Naive thymus-derived CD8-positive, alpha-beta T cell (primary cell): ENCODE measurements at regions of chr4 and their contacts with region 1.

Region 1: GRCh38 chr4:4347585-4347984 is 39.3 kb upstream of the NSG1 start:
- DNase-seq: peak in 2 of 10 donors; percentile 3 to 10
- ATAC-seq: no peak
- H3K4me3 Mint-ChIP-seq: peak overlapping the region in 9 of 10 donors; percentile 1 to 82 (median 60)
- H3K27ac Mint-ChIP-seq: peak overlapping the region; percentile 59 to 99 (median 94)
- H3K4me1 Mint-ChIP-seq: peaks cover 27 to 63% (median 45%) of the 10 kb centered on the region in 4 donors
- H3K27me3 Mint-ChIP-seq: no peaks in the 10 kb centered on the region

Region 2: GRCh38 chr4:4308800-4309441 is 38.7 kb before region 1 on chr4:
- POLR2A ChIA-PET with region 1: no interaction called
- DNase-seq: no peak
- ATAC-seq: no peak
- H3K4me3 Mint-ChIP-seq: no peak overlapping the region
- H3K27ac Mint-ChIP-seq: no peak overlapping the region
- H3K4me1 Mint-ChIP-seq: peaks cover 3 to 7% (median 6%) of the 10 kb centered on the region in 4 donors
- H3K27me3 Mint-ChIP-seq: no peaks in the 10 kb centered on the region

Region 3: GRCh38 chr4:4334798-4335520 is 12.6 kb before region 1 on chr4:
- POLR2A ChIA-PET with region 1: interaction called, 36 read pairs
- DNase-seq: peak; percentile 56 to 86 (median 73)
- ATAC-seq: peak; percentile 98
- H3K4me3 Mint-ChIP-seq: peak overlapping the region in 6 of 10 donors; percentile 42 to 62 (median 56)
- H3K27ac Mint-ChIP-seq: peak overlapping the region in 8 of 10 donors; percentile 23 to 86 (median 58)
- H3K4me1 Mint-ChIP-seq: peaks cover 0 to 23% (median 9%) of the 10 kb centered on the region in 4 donors
- H3K27me3 Mint-ChIP-seq: peaks cover 0 to 1% (median 0%) of the 10 kb centered on the region in 5 donors

Region 4: GRCh38 chr4:4386736-4387392 is 39.3 kb after region 1 on chr4 and contains the start of gene NSG1:
- POLR2A ChIA-PET with region 1: interaction called, 31 read pairs
- DNase-seq: peak; percentile 8 to 74 (median 55)
- ATAC-seq: peak; percentile 62 to 70
- H3K4me3 Mint-ChIP-seq: peak within 1 kb of the TSS; percentile 87 to 97 (median 92)
- H3K27ac Mint-ChIP-seq: peak within 1 kb of the TSS; percentile 52 to 92 (median 82)
- H3K4me1 Mint-ChIP-seq: peaks cover 13 to 35% (median 20%) of the 10 kb centered on the region in 4 donors
- H3K27me3 Mint-ChIP-seq: peaks cover 0 to 33% (median 0%) of the 10 kb centered on the region in 5 donors
- polyA plus RNA-seq, gene NSG1: 28.1 to 66.1 (median 30.1) TPM